Calu3 (cell line): ENCODE measurements at regions of chr11 and their contacts with region 1.

Region 1: DNA sequence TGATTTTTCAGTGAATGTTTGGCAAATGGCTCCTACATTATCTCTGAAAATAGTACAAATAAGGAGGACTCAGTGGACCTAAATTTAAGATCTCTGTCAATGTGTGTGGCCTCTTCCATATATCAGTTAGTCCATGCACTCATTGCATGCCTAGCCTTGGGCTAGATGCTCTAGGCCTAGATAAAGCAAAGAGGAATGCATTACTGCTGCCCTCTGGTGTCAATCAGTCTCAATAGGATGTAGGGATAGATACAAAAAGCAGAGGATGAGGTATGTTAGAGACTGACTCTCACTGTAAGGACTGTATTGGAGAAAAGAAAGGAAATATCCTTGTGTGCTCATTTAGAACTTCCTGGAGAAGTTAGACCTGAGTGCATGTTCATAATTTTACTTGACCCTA is 42.0 kb downstream of the MS4A2 start:
- DNase-seq: peak; percentile 59
- H3K4me3 Mint-ChIP-seq: no peak overlapping the region
- H3K27ac Mint-ChIP-seq: peak overlapping the region; percentile 38
- H3K4me1 Mint-ChIP-seq: peaks cover 46% of the 10 kb centered on the region
- H3K27me3 Mint-ChIP-seq: no peaks in the 10 kb centered on the region
- CTCF ChIP-seq: peak; percentile 50

Region 2: DNA sequence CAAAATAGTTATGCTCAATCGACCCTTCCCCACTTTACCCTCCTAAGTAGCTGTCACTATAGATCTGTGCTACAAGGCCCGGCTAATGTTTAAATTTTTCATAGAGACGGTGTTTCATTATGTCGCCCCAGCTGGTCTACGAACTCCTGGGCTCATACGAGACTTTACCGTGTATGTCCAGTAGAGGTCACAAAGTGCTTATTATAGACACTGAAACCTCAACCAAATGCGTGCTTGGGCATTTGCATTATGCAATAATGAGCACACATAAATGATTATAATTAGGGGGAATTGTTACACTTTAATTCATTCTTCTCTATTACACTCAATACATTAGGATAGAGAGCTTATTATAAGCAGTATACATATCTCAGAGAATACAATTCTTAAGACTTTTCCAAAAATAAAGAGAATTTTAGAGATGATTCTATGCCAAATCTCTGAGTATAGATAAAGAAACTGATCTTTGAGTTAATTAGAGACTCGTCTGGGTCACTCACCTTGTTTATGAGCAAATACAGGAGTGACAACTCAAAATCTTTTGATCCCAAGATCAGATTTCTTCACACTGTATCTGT is 307.4 kb before region 1 on chr11:
- CTCF ChIA-PET with region 1: interaction called, 4 read pairs
- intact Hi-C with region 1: loop called (anchors 1 kb)
- DNase-seq: peak; percentile 57
- H3K4me3 Mint-ChIP-seq: peak overlapping the region; percentile 1
- H3K27ac Mint-ChIP-seq: peak overlapping the region; percentile 12
- H3K4me1 Mint-ChIP-seq: peaks cover 9% of the 10 kb centered on the region
- H3K27me3 Mint-ChIP-seq: no peaks in the 10 kb centered on the region
- CTCF ChIP-seq: peak; percentile 42

Region 3: DNA sequence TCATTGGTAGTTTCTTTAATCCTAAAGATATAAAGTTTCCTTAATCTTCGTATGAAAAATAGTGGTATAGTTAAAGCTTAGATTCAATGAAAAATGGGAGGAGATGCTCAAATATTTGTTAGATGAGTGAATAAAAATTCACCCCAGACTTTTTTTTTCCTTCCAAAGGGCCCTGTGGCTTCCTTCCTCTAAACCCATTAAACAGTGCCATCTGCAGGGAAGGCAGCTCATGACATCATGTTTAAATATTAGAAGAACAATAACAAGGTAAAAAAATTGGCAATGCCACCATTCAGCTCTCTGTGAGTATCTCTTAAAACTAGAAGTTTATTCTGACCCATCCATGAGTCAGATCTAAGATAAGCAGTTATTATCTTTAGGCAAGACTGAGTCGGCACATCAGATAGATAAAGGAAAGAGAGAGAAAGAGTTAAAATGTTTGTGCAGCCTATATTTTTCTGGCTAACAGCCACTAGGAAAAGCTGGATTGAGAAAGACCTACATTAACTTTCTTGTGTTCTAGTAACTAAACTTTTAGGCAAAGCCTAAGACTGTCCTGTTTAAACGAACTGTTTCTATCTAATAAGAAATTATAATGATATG is 211.4 kb before region 1 on chr11:
- CTCF ChIA-PET with region 1: interaction called, 7 read pairs
- intact Hi-C with region 1: loop called (anchors 1 kb)
- DNase-seq: peak; percentile 59
- H3K4me3 Mint-ChIP-seq: no peak overlapping the region
- H3K27ac Mint-ChIP-seq: peak overlapping the region; percentile 23
- H3K4me1 Mint-ChIP-seq: peaks cover 24% of the 10 kb centered on the region
- H3K27me3 Mint-ChIP-seq: no peaks in the 10 kb centered on the region
- CTCF ChIP-seq: peak; percentile 59

Region 4: DNA sequence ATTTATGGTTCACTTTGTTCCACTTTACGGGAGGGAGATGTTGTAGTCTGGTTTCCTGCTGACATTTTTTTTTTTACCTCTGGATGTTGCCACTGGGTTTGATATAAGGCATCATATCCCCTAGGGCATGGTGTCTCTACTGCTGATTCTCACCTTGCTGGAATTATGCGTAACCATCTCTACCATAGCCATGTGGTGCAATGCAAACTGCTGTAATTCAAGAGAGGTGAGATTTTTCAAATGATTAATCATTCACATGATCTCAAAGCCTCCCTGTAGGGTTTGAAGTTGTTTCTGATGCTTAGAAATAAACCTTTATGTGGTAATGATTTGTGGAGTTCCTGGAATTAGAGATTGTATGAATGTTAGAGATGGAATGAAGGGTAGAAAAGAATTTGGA is 61.0 kb before region 1 on chr11:
- CTCF ChIA-PET with region 1: interaction called, 4 read pairs
- intact Hi-C with region 1: loop called (anchors 5 kb)
- DNase-seq: peak; percentile 3
- H3K4me3 Mint-ChIP-seq: no peak overlapping the region
- H3K27ac Mint-ChIP-seq: peak overlapping the region; percentile 45
- H3K4me1 Mint-ChIP-seq: peaks cover 10% of the 10 kb centered on the region
- H3K27me3 Mint-ChIP-seq: no peaks in the 10 kb centered on the region
- CTCF ChIP-seq: no peak

Region 5: GRCh38 chr11:60251485-60252212 is 121.2 kb after region 1 on chr11:
- CTCF ChIA-PET with region 1: interaction called, 8 read pairs
- intact Hi-C with region 1: loop called (anchors 5 kb)
- DNase-seq: peak; percentile 13
- H3K4me3 Mint-ChIP-seq: no peak overlapping the region
- H3K27ac Mint-ChIP-seq: peak overlapping the region; percentile 33
- H3K4me1 Mint-ChIP-seq: peaks cover 12% of the 10 kb centered on the region
- H3K27me3 Mint-ChIP-seq: no peaks in the 10 kb centered on the region
- CTCF ChIP-seq: peak; percentile 41